Psoas muscle (tissue), 8 donors: ENCODE measurements at regions of chr11 and their contacts with region 1.

Region 1: DNA sequence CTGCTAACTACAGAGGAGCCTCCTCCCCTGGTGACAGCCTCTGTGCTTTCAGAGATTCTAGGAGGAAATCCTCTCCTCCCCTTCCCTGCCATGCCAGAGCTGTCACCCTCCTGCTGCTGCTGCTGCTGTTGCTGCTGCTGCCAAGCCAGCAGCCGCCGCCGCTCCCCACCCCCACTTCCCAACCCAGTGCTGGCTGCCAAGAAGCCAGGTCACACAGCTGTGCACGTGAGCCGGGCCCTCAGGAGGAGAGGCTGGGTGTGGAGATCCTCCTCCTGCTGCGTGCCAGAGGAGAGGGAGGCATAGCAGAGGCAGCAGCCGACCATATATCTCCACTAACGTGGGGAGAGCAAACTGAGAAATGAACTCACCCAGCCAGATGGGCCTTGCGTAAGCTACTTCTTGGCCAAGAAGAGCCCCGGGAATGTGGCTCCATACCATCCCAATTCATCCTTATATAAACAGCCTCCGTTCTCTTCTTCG is 12.4 kb downstream of the CRY2 start:
- DNase-seq: peak; percentile 92 to 96
- ATAC-seq: peak; percentile 74 to 90 (median 87)
- H3K4me3 ChIP-seq: no peak overlapping the region
- H3K27ac ChIP-seq: peak overlapping the region; percentile 84
- H3K4me1 ChIP-seq: peaks cover 69% of the 10 kb centered on the region
- H3K27me3 ChIP-seq: no peaks in the 10 kb centered on the region
- CTCF ChIP-seq: no peak

Region 2: DNA sequence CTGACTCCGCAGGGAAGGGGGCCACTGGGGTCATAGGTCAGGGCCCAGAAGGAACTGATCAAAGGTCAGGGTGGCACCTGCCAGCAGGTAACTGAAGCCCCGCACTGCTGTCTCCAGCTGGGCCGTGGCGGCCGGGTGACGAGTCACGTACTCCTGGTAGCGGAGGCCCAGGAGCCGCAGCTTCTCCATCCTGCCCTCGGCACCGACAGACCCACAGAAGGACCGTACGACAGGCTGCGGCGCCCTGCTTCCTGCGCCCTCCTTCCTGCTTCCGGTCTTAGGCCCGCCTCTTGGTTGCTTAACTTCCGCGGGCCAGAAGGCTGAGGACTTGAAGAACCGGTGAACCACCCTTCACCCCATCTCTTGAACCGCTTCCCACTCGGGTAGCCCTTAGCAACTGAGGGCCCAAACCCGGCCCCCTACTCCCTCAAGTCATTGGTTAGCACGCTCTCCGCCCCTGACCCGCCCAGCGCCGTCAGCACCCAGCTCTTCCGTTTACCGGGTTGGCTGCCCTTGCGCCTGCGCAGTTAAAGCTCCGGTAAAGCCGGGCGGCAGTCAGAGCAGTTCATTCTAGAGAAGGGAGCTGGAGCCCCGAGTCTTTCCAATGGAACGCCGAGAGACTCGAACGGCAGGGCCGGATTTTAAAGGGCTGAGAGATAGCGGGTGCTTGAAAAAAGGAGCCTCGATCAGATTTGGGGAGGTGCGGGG is 58.1 kb after region 1 on chr11 and contains the start of gene PEX16:
- intact Hi-C with region 1: loop called in 1 of 2 experiments (anchors 10 kb)
- DNase-seq: peak; percentile 97 to 99
- ATAC-seq: peak; percentile 91 to 96 (median 95)
- H3K4me3 ChIP-seq: peak within 1 kb of the TSS; percentile 100
- H3K27ac ChIP-seq: peak within 1 kb of the TSS; percentile 97
- H3K4me1 ChIP-seq: peaks cover 21% of the 10 kb centered on the region
- H3K27me3 ChIP-seq: peaks cover 0 to 10% (median 9%) of the 10 kb centered on the region in 3 donors
- CTCF ChIP-seq: no peak
- total RNA-seq, gene PEX16: 12.1 to 23.5 (median 14.2) TPM